ENCODE measurements at regions of chr1 and their contacts with region 1.

Region 1: GRCh38 chr1:21308847-21309652 is 18.8 kb upstream of the ECE1 start:
- DNase-seq: no peak
- H3K4me3 ChIP-seq: no peak overlapping the region
- H3K27ac ChIP-seq: peak overlapping the region; percentile 86
- H3K4me1 ChIP-seq: peaks cover 90% of the 10 kb centered on the region
- H3K27me3 ChIP-seq: no peaks in the 10 kb centered on the region
- CTCF ChIP-seq: no peak
- POLR2A ChIP-seq: no peak

Region 2: DNA sequence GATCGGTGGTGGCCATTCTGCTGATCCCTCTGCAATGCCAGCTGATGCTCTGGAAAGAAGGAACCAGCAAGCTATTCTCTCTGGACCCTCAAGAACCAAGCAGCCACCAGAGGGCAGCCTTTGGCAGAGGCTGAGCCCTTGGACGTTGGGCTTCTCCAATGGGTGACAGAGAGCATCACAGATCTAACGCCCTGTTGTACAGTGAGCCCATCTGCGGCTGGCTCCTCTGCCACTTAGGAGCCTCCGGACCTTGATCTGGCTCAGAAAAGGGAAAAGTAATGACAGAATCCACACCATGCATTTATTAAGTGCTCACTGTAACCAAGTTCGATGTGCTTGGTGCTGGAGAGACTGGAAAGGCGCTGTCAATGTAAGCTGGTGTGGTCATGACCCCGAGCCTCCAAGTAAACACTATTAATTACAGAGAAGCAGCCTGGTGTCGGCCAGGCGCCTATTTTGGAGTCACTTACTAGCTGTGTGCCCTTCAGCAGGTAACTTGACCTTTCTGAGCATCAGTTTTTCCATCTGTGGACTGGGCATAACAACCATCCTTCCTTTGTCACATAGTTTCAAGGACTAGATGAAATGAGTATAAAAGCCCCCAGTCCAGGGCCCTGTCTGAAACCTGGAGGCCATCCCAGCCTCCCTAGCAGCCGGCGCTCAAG is 53.6 kb before region 1 on chr1:
- intact Hi-C with region 1: loop called (anchors 2 kb)
- DNase-seq: no peak
- H3K4me3 ChIP-seq: no peak overlapping the region
- H3K27ac ChIP-seq: peak overlapping the region; percentile 89
- H3K4me1 ChIP-seq: peaks cover 74% of the 10 kb centered on the region
- H3K27me3 ChIP-seq: no peaks in the 10 kb centered on the region
- CTCF ChIP-seq: peak; percentile 63 to 94 (median 81)
- POLR2A ChIP-seq: no peak

Measured in vagina (tissue), 2 donors.